GM10248 (cell line): ENCODE measurements at regions of chr10 and their contacts with region 1.

Region 1: GRCh38 chr10:80472234-80473095 is 18.4 kb downstream of the TSPAN14 start:
- DNase-seq: peak; percentile 76
- CTCF ChIP-seq: no peak

Region 2: GRCh38 chr10:80459047-80459931 is 13.2 kb before region 1 on chr10:
- CTCF ChIA-PET with region 1: interaction called, 34 read pairs
- POLR2A ChIA-PET with region 1: interaction called, 3 read pairs
- DNase-seq: peak; percentile 73
- CTCF ChIP-seq: no peak

Region 3: GRCh38 chr10:80493522-80494051 is 21.1 kb after region 1 on chr10:
- CTCF ChIA-PET with region 1: interaction called, 1,060 read pairs
- POLR2A ChIA-PET with region 1: no interaction called
- DNase-seq: no peak
- CTCF ChIP-seq: no peak